ENCODE measurements at regions of chr13 and their contacts with region 1.

Region 1: GRCh38 chr13:20064128-20064527 is 96.7 kb downstream of the GJA3 start:
- DNase-seq: no peak

Region 2: GRCh38 chr13:20131057-20131832 is 67.1 kb after region 1 on chr13:
- intact Hi-C with region 1: loop called in 1 of 2 experiments (anchors 2 kb)
- DNase-seq: peak; percentile 65

Region 3: GRCh38 chr13:21420706-21421105 is 1356.6 kb after region 1 on chr13:
- intact Hi-C with region 1: no loop called
- DNase-seq: no peak